ENCODE measurements at regions of chr10 and their contacts with region 1.

Region 1: DNA sequence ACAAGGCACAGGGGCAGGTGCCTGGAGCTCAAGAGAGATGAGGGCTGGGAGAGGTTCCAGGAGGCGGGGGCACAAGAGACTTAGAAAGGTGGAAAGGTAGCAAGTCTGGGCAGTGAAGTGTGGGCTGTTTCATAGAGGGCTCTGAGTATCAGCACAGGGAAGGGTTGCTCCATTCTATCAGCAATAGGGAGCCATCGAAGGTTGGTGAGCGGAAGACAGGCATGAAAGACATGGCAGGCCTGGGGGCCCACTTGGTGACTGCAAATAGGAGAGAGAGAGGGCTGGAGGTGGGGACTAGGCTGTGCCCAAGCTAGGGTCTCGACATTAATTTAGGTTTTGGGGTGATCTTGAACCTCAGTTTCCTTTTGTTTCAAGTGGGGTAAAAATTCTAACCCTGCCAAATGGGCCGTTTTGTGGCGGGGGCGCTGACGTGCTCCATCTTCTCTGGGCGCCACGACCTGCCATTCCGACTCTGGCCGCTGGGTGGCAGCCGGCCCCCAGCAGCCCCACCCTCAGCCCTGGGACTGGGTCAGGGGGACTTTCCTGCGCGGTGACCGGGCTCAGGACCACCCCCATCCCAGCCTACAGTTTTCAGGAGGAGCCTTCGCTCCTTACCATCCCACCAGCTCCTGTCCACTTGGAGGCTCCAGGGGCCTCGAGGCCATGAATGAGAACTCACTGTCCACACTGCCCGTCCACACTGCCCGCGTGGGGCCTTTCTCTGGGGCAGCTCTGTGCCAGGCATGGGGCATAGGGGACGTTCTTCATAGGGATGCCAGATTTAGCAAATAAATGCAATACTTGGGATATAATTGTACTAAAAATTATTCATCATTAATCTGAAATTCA is 37.2 kb upstream of the PCBD1 start:
- DNase-seq: peak; percentile 56
- ATAC-seq: peak; percentile 72
- H3K4me3 Mint-ChIP-seq: no peak overlapping the region
- H3K27ac Mint-ChIP-seq: no peak overlapping the region
- H3K4me1 Mint-ChIP-seq: peaks cover 4% of the 10 kb centered on the region
- H3K27me3 Mint-ChIP-seq: peaks cover 12% of the 10 kb centered on the region

Region 2: DNA sequence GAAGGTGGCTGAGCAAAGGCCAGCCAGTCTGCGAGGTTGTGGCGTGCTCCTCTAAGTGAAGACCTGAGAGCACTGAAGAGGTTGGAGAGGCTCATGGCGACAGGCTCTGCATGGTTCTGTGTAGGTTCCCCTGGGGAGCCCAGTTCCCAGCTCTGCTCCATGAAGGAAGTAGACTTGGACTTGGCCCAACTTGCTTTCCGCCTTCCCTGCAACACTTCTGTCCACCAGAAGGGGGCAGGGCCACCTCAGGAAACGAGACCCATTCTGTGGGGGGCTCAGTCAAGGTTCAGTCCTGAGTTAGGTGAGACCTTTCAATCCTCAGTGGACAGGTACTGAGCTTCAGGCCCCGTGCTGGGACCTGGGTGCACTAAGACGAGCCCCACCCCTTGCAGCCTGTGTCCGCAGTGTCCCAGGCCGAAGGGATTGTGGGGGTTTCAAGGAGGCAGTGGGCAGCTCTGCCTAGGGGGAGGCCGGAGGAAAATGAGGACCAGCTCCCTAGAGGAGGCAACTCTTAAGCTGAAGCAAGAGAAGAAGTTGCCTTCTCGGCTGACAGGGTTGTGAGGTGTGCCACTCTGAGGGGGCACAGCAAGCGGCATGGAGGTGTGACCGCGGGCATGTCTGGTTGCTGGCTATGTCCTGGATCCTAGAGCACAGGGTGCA is 22.2 kb before region 1 on chr10:
- CTCF ChIA-PET with region 1: interaction called, 13 read pairs
- DNase-seq: peak; percentile 50
- ATAC-seq: no peak
- H3K4me3 Mint-ChIP-seq: no peak overlapping the region
- H3K27ac Mint-ChIP-seq: no peak overlapping the region
- H3K4me1 Mint-ChIP-seq: no peaks in the 10 kb centered on the region
- H3K27me3 Mint-ChIP-seq: peaks cover 6% of the 10 kb centered on the region

Region 3: GRCh38 chr10:71064413-71065118 is 139.0 kb after region 1 on chr10:
- CTCF ChIA-PET with region 1: interaction called, 10 read pairs
- DNase-seq: no peak
- ATAC-seq: no peak
- H3K4me3 Mint-ChIP-seq: no peak overlapping the region
- H3K27ac Mint-ChIP-seq: no peak overlapping the region
- H3K4me1 Mint-ChIP-seq: no peaks in the 10 kb centered on the region
- H3K27me3 Mint-ChIP-seq: no peaks in the 10 kb centered on the region

Region 4: DNA sequence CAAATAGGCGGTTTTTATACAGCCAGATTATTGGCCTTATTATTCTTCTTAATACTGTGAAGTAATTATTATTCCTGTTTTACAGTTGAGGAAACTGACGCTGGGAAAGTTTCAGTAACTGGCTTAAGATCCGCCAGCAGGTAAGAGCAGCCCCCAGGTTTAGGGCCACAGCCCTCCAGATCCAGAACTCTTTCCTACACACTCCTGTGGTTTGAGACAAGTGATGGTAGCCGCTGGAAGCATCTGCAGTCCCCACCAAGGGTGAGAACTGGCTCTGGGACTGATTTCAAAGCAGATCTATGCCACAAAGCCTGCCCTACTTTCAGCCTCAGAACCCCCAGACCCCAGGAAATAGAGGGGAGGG is 283.7 kb after region 1 on chr10:
- CTCF ChIA-PET with region 1: interaction called, 20 read pairs
- DNase-seq: no peak
- ATAC-seq: no peak
- H3K4me3 Mint-ChIP-seq: no peak overlapping the region
- H3K27ac Mint-ChIP-seq: no peak overlapping the region
- H3K4me1 Mint-ChIP-seq: peaks cover 9% of the 10 kb centered on the region
- H3K27me3 Mint-ChIP-seq: peaks cover 80% of the 10 kb centered on the region